ENCODE measurements at regions of chr19 and their contacts with region 1.

Region 1: DNA sequence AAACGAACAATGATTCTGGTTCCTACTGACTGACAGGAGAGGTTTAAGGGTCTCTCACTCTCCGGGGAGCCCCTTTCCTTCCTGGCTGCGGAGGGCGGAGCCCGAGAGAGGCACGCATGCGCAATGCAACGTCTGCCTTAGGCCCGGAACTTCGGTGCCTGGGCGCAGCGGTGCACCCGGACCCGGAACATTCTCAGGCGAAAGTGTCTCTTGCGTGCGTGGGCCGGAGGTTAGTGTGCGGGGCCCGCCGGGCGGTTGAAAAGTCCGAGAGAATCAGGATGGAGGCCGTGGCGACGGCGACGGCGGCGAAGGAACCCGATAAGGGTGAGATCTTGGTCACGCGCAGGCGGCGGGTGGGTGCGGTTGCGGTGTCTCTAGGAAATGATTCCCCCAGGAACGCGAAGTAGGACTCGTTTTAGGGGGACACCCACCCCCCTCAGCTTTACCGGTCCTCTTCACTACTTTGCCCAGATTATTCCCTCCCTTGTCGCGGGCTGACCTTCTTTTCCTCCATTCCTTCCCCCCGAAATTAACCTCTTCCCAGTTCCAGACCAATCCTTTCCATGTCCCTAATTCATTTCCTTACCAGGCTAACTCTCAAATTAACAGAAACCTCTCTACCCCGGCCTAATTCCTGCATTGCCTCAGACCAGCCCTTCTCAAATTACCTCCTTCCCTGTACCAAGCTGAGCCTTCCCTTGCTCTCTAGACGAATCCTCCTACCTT is at the start of gene CCDC97:
- DNase-seq: peak; percentile 91
- H3K4me3 ChIP-seq: peak within 1 kb of the TSS; percentile 71 to 97 (median 81)
- H3K27ac ChIP-seq: peak within 1 kb of the TSS; percentile 57
- H3K4me1 ChIP-seq: peaks cover 42% of the 10 kb centered on the region
- H3K27me3 ChIP-seq: no peaks in the 10 kb centered on the region
- CTCF ChIP-seq: no peak
- POLR2A ChIP-seq: peak; percentile 98
- total RNA-seq, gene CCDC97: 24.2 and 27.2 TPM in 2 replicates

Region 2: GRCh38 chr19:41123716-41124294 is 186.4 kb before region 1 on chr19:
- CTCF ChIA-PET with region 1: interaction called, 3 read pairs
- POLR2A ChIA-PET with region 1: no interaction called
- dilution Hi-C with region 1: no loop called
- intact Hi-C with region 1: loop called (anchors 5 kb)
- DNase-seq: no peak
- H3K4me3 ChIP-seq: no peak overlapping the region
- H3K27ac ChIP-seq: no peak overlapping the region
- H3K4me1 ChIP-seq: no peaks in the 10 kb centered on the region
- H3K27me3 ChIP-seq: peaks cover 0 to under 1% of the 10 kb centered on the region in 2 experiments
- CTCF ChIP-seq: no peak
- POLR2A ChIP-seq: no peak

Region 3: DNA sequence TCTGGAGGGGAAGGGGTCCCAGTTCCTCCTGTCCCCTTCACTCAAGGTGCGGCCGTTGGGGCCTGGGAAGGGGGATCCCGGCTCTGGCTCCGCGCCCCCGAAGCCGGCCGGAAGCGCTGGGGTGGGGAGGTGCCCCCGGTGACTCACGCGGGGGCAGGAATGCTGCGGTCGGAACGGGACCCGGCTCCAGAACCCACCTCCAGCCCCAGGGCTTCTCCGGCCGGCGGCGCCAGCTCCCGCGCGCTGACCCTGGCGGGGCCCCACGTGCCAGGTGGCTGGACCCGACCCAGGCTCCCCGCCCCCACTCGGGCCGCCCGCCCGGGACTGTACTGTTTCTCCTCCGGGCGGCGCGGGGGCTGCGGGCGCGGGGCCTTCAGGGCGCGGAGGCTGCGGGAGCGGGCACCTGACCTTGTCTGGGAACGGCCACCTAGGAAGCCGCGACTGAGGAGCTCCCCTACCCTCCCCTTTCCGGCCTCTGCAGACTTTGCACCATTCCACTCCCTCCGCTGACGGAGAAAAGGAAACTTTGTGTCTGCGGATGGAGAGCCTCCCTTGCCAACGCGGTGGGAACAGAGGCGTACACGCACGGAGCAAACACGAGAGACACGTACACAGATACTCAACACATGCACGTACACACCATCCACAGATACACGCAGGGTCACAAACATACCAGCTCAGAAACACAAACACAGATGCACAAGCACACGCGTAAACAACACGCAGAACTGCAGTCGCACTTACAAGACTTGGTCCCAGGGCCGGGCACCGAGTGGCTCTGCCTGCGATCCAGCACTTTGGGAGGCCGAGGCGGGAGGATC is 83.9 kb before region 1 on chr19:
- CTCF ChIA-PET with region 1: no interaction called
- POLR2A ChIA-PET with region 1: no interaction called
- dilution Hi-C with region 1: no loop called
- intact Hi-C with region 1: loop called (anchors 5 kb)
- DNase-seq: peak; percentile 59
- H3K4me3 ChIP-seq: peak overlapping the region in 2 of 3 experiments; percentile 32 to 50
- H3K27ac ChIP-seq: peak overlapping the region; percentile 76
- H3K4me1 ChIP-seq: peaks cover 44% of the 10 kb centered on the region
- H3K27me3 ChIP-seq: no peaks in the 10 kb centered on the region
- CTCF ChIP-seq: no peak
- POLR2A ChIP-seq: no peak

Region 4: GRCh38 chr19:41298348-41298964 is 11.7 kb before region 1 on chr19:
- CTCF ChIA-PET with region 1: interaction called, 20 read pairs
- POLR2A ChIA-PET with region 1: no interaction called
- dilution Hi-C with region 1: no loop called
- intact Hi-C with region 1: no loop called
- DNase-seq: peak; percentile 59
- H3K4me3 ChIP-seq: no peak overlapping the region
- H3K27ac ChIP-seq: peak overlapping the region; percentile 45
- H3K4me1 ChIP-seq: no peaks in the 10 kb centered on the region
- H3K27me3 ChIP-seq: no peaks in the 10 kb centered on the region
- CTCF ChIP-seq: no peak
- POLR2A ChIP-seq: no peak

Region 5: DNA sequence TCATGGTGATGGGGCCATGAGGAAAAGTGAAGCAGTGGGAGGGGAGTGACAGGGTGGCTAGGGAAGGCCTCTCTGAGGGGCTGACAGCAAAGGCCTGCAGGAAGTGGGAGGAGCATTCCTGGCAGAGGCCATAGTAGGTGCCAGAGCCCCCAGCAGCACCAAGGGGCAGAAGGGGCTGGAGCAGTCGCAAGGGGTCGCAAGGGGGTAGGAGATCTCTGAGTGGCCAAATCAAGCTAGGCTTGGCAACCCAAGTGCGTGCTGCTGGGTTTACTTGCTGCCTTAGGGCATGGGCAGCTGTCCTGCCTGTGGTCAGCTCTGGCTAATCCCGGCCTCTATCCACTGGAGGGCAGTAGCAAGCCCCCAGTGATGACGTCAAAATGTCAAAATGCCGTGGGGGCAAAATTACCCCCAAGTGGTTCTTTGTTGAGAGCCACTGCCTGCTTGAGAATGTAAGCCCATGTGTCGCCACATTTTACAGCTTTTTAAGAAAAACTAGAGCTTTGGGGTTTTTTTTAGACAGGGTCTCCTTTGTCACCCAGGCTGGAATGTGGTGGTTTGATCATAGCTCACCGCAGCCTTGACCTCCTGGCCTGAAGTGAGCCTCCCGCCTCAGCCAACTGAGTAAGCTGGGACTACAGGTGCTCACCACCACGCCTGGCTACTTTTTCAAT is 11.5 kb after region 1 on chr19:
- CTCF ChIA-PET with region 1: interaction called, 12 read pairs
- POLR2A ChIA-PET with region 1: interaction called, 7 read pairs
- dilution Hi-C with region 1: no loop called
- intact Hi-C with region 1: no loop called
- DNase-seq: peak; percentile 76
- H3K4me3 ChIP-seq: no peak overlapping the region
- H3K27ac ChIP-seq: peak overlapping the region; percentile 100
- H3K4me1 ChIP-seq: peaks cover 46% of the 10 kb centered on the region
- H3K27me3 ChIP-seq: no peaks in the 10 kb centered on the region
- CTCF ChIP-seq: peak; percentile 83 to 89
- POLR2A ChIP-seq: peak; percentile 38

Region 6: DNA sequence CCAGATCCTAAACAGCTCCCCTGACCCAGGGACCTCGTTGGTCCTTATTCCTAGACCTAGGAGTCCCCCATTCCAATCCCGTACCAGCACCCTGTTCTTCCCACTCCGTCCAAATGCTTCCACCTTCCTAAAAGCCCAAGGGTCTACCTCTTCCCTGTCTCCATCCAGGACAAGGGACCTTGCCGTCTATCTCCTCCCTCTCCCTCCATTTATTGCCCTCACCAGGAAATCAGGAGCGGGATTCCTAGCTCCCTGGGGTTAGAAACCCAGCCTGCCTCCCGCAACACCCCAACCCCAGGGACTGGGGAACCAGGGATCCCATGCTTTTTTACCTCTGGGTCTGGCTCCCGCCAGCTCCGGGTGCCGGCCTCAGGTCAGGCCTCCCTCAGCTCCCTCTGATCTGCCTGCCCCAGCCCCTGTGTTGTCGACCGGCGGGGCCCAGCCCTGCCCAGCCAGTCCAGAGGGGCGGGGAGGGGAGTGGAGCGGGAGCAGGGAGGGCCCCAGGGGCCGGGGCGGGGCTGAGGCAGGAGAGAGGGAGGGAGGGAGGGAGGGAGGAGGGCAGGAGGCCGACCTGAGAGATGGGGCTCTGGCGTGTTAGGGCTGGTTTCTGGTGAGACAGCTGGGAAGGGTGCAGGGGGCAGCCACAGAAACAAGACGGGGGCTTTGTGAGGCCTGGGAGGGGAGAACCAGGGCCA is 116.9 kb after region 1 on chr19 and contains the start of gene B3GNT8:
- CTCF ChIA-PET with region 1: interaction called, 8 read pairs
- POLR2A ChIA-PET with region 1: no interaction called
- dilution Hi-C with region 1: no loop called
- intact Hi-C with region 1: loop called (anchors 5 kb)
- DNase-seq: peak; percentile 60
- H3K4me3 ChIP-seq: peak within 1 kb of the TSS; percentile 41 to 49 (median 41)
- H3K27ac ChIP-seq: peak within 1 kb of the TSS; percentile 62
- H3K4me1 ChIP-seq: peaks cover 25% of the 10 kb centered on the region
- H3K27me3 ChIP-seq: no peaks in the 10 kb centered on the region
- CTCF ChIP-seq: no peak
- POLR2A ChIP-seq: peak; percentile 51
- total RNA-seq, gene B3GNT8: 6.5 and 7.6 TPM in 2 replicates

Measured in endothelial cell of umbilical vein (primary cell).